Endothelial cell of umbilical vein (primary cell): ENCODE measurements at regions of chr13 and their contacts with region 1.

Region 1: DNA sequence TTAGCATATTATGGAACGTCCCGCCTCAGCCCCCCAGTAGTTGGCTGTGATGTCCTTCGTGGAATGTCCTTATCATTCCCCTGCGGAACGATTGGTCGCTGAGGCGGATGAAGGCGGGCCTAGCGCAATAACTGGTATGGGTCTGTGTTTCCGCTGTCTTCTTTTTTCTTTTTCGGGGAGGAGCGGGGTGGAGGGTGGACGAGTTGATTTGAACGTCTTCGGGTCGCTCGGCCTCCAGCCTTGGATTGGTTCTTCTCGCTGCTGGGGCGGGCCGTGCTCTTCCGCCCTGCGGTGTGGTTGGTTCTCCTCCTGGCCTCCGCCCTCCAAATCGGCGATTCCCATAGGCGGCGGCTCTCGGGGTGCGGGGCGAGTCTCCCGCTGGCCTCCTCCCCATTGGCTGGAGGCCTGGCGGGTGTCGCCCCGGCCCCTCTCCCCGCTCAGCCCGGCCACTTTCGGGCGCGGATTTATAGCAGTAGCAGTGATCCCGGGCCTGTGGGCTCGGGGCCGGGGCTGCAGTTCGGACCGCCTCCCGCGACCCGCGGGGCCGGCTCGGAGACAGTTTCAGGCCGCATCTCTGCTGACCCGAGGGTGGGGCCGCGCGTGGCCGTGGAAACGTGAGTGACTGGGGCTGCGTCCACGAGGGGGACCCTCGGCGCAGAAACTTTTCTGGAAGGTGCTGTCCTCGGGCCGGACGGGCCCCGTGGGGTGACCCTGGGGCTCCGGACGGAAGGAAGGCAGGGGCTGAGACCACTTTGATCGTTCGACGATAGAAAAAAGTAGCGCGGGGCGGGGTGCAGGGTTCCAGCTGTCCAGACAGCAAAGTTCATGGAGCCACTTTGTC is 2.1 kb downstream of the ING1 start:
- DNase-seq: peak; percentile 100
- H3K4me3 ChIP-seq: peak overlapping the region; percentile 85 to 89 (median 87)
- H3K27ac ChIP-seq: peak overlapping the region; percentile 45
- H3K4me1 ChIP-seq: peaks cover 18% of the 10 kb centered on the region
- H3K27me3 ChIP-seq: no peaks in the 10 kb centered on the region
- CTCF ChIP-seq: peak in 1 of 2 donors; percentile 12
- POLR2A ChIP-seq: no peak

Region 2: DNA sequence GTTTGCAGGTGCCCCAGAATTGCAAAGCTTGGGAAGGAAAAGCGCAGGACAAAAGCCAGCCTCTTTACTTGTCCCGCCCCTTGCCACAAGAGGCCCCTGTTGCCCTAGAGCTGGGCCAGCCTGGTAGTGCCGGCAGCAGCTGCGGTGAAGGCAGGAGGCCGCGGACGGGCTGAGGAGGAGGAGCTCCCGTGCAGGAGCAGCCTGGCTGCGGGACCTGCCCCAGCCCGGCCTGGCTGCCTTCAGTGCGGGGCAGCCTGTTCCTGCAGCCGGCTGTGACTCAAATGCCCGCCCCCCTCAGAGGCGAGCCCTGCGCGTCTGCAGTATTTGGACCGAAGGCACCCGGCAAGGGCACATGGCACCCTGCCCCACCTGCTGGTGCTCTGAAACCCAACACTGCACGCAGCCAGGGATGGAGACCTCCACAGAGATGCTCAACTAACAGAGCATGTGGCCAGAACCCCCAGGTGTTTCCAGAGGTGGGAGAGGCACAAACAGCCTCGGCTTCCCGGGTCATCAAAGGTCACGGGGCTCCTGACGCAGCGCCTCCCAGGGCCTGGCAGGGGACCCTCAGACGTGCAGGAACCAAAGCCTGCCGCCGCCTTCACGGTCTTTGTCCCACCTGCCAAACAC is 70.6 kb before region 1 on chr13:
- CTCF ChIA-PET with region 1: interaction called, 4 read pairs
- POLR2A ChIA-PET with region 1: interaction called, 3 read pairs
- dilution Hi-C with region 1: no loop called
- intact Hi-C with region 1: loop called (anchors 2 kb)
- DNase-seq: peak; percentile 50
- H3K4me3 ChIP-seq: no peak overlapping the region
- H3K27ac ChIP-seq: no peak overlapping the region
- H3K4me1 ChIP-seq: no peaks in the 10 kb centered on the region
- H3K27me3 ChIP-seq: no peaks in the 10 kb centered on the region
- CTCF ChIP-seq: peak; percentile 26 to 57
- POLR2A ChIP-seq: no peak

Region 3: GRCh38 chr13:110771194-110771593 is 55.6 kb after region 1 on chr13:
- CTCF ChIA-PET with region 1: no interaction called
- POLR2A ChIA-PET with region 1: no interaction called
- dilution Hi-C with region 1: no loop called
- intact Hi-C with region 1: loop called (anchors 2 kb)
- DNase-seq: peak; percentile 61
- H3K4me3 ChIP-seq: no peak overlapping the region
- H3K27ac ChIP-seq: no peak overlapping the region
- H3K4me1 ChIP-seq: peaks cover 10% of the 10 kb centered on the region
- H3K27me3 ChIP-seq: peaks cover 0 to 2% of the 10 kb centered on the region in 2 experiments
- CTCF ChIP-seq: no peak
- POLR2A ChIP-seq: no peak

Region 4: DNA sequence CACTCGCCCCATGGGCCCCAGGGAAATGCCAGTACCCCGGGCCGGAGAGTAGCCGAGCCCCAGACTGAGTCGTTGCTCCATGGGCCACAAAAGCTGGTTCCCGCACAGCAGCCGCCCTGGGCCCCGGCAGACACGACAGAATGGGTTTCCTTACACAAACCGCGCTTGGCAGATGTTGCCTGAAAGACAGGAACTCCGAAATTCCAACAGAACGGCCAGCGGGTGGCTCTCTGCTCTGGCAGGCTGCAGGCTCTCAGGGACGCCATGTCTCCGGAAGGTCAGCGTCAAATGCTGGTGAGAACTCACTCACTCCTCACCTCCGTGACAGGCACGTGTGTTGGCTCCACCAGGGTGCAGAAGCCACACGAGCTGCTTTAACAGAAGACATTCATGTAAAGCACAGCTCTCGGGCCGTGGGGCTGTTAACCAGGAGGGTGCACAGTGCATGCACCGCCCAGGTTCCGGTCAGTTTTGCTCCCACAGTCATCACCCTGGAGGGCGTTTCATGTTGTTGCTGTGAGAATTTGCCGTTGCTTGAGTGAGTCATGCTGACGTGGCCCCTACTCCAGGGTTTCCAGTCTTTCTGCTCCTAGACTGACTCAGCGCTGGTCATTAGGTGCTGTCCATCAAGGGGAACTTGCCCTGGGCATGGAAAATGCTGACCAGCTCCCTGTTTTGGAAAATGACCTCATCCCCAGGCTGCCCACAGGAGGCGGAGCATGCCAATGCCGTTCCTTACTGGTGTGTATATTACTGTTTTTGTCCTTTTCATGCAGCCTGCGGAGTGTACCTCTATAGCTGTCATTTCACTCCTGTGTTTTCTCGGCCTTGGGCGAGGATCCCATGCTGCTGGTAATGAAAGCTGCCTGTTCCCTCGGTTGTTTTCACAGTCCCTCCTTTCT is 154.4 kb after region 1 on chr13:
- CTCF ChIA-PET with region 1: no interaction called
- POLR2A ChIA-PET with region 1: interaction called, 9 read pairs
- dilution Hi-C with region 1: no loop called
- intact Hi-C with region 1: loop called (anchors 1 kb)
- DNase-seq: peak; percentile 99
- H3K4me3 ChIP-seq: peak overlapping the region in 2 of 3 experiments; percentile 3 to 45
- H3K27ac ChIP-seq: peak overlapping the region; percentile 86
- H3K4me1 ChIP-seq: peaks cover 17% of the 10 kb centered on the region
- H3K27me3 ChIP-seq: peaks cover 0 to 2% of the 10 kb centered on the region in 2 experiments
- CTCF ChIP-seq: peak in 1 of 2 donors; percentile 6
- POLR2A ChIP-seq: no peak

Region 5: DNA sequence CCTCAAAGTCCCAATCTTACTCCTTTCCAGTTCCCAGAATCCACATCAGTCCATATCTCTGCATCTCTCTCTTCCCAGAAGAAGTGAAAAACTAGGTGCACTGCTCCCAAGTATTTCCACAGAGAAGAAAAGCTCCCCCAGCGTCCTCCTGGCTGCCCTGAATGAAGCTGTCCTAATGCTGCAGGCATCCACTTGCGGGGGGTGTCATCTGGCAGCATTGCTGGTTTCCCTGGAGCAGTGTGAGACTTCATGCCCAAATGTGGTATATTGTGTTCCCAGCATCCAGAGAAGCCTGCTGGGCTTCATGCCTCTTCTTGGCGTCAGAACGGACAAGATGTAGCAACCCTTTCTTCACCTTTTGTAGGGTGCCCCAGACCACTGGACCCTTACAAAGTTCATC is 366.6 kb after region 1 on chr13:
- CTCF ChIA-PET with region 1: no interaction called
- POLR2A ChIA-PET with region 1: no interaction called
- dilution Hi-C with region 1: no loop called
- intact Hi-C with region 1: no loop called
- DNase-seq: no peak
- H3K4me3 ChIP-seq: no peak overlapping the region
- H3K27ac ChIP-seq: no peak overlapping the region
- H3K4me1 ChIP-seq: no peaks in the 10 kb centered on the region
- H3K27me3 ChIP-seq: no peaks in the 10 kb centered on the region
- CTCF ChIP-seq: no peak
- POLR2A ChIP-seq: no peak

Region 6: DNA sequence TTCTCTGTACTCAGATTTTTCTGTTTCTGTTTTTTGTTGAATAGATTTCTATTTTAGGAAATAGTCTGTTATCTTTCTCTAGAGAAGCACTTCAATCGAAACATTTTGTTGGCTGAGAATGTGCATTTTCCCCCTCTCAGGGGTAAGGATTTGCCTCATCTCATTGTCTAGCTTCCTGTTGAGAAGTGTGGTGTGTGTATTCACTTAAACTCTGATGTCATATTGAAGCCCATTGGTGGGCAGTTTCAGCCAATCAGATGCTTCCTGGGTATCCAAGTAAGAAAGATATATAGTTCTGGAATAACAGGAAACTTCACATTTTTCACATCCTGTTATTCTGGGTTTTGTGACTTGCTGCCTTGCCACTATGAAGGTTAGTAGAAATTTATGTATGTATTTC is 487.1 kb after region 1 on chr13:
- CTCF ChIA-PET with region 1: no interaction called
- POLR2A ChIA-PET with region 1: interaction called, 11 read pairs
- dilution Hi-C with region 1: no loop called
- intact Hi-C with region 1: no loop called
- DNase-seq: peak; percentile 99
- H3K4me3 ChIP-seq: peak overlapping the region; percentile 65 to 97 (median 82)
- H3K27ac ChIP-seq: peak overlapping the region; percentile 100
- H3K4me1 ChIP-seq: peaks cover 28% of the 10 kb centered on the region
- H3K27me3 ChIP-seq: no peaks in the 10 kb centered on the region
- CTCF ChIP-seq: no peak
- POLR2A ChIP-seq: peak; percentile 80